Mammary epithelial cell (primary cell): ENCODE measurements at regions of chr6 and their contacts with region 1.

Region 1: DNA sequence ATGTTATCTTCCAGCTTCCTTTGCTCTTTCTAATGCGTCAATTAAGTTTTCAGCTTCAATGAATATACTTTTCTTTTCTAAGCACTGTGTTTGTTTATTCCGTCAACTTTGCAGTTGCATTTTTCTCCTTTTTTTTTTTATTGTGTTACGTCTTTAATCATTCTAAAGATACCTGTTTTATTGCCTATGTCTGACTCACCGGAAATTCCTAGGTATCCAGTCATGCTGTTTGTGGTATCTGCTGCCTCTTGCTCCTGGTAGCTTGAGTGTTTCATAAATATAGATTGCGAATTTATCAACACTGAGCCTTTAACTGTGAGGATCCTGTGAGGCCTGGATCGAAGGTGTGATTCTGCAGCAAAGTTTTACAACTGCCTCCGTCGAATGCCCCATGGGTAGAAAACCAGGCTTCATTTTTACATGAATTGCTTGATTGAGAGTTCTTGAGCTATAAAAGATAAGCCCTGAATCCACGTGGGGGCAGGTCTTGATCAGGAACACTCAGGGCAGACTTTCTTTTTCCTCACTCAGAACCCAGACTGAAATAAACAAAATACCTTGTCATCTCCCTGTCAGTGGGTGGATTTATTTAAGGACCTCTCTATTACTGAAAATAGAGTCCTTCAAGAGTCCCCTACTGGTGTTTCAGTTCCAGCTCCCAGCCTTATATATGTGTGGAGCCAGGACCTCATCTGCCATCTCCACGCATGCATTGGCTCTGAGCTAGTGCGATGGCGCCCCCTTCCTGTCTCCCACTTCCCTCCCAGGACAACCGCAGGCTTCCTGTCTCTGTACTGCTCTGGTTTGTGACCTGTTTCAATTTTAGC is 60.1 kb upstream of the LRRC1 start:
- DNase-seq: peak; percentile 93
- H3K4me3 ChIP-seq: peak overlapping the region in 2 of 3 experiments; percentile 25 to 29
- H3K27ac ChIP-seq: peak overlapping the region; percentile 87
- H3K4me1 ChIP-seq: peaks cover 31% of the 10 kb centered on the region
- H3K27me3 ChIP-seq: no peaks in the 10 kb centered on the region
- CTCF ChIP-seq: peak; percentile 52 to 61

Region 2: GRCh38 chr6:53556986-53557715 is 177.5 kb before region 1 on chr6:
- CTCF ChIA-PET with region 1: no interaction called
- dilution Hi-C with region 1: no loop called
- in situ Hi-C with region 1: no loop called
- intact Hi-C with region 1: no loop called
- DNase-seq: no peak
- H3K4me3 ChIP-seq: no peak overlapping the region
- H3K27ac ChIP-seq: no peak overlapping the region
- H3K4me1 ChIP-seq: no peaks in the 10 kb centered on the region
- H3K27me3 ChIP-seq: no peaks in the 10 kb centered on the region
- CTCF ChIP-seq: no peak

Region 3: DNA sequence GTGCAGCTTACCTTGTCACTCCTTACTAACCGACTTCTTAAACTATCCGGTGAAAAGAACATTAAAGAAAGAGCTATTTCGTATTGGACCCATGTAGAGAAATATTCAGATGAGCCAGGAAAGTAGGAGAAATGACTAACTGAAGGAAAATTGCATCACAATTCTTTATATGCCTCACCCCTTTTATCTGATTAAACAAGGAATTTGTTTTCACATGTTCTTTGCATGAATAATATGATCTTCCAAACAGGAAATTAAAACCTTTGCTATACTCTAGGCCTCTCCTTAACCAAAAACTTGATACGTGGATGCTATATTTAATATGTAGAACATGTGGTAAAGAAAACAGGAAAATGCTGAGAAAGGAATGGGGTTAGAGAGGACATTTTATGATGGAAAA is 18.2 kb after region 1 on chr6:
- CTCF ChIA-PET with region 1: no interaction called
- dilution Hi-C with region 1: no loop called
- in situ Hi-C with region 1: no loop called
- intact Hi-C with region 1: loop called (anchors 2 kb)
- DNase-seq: peak; percentile 76
- H3K4me3 ChIP-seq: no peak overlapping the region
- H3K27ac ChIP-seq: peak overlapping the region; percentile 86
- H3K4me1 ChIP-seq: peaks cover 22% of the 10 kb centered on the region
- H3K27me3 ChIP-seq: no peaks in the 10 kb centered on the region
- CTCF ChIP-seq: no peak

Region 4: DNA sequence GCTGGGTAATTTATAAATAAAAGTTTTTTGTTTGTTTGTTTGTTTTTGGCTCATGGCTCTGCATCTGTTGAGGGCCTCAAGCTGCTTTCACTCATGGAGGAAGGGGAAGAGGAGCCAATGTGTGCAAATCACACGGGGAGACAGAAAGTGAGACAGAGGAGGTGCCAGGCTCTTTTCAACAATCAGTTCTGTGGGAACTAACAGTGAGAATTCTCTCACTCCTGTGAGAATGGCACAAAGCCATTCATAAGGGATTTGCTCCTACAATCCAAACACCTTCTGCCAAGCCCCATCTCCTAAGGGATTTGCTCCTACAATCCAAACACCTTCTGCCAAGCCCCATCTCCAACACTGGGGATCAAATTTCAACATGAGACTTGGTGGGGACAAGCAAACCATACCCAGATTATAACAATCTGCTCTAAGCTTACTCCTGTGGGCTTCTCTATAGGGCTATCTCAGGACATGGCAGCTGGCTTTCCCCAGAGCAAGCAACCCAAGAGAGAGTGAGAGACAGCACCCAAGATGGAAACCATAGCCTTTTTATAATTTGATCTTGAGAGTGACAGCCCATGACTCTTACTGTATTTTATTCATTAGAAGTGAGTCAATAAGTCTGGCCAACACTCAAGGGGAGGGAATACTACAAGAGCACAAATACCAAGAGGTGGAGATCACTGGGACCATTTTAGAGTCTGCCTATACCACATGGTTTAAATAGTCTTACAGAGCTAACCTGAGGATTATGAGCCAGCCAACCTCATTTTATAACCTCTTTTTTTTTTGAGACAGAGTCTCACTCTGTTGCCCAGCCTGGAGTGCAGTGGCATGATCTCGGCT is 37.3 kb after region 1 on chr6:
- CTCF ChIA-PET with region 1: no interaction called
- dilution Hi-C with region 1: no loop called
- in situ Hi-C with region 1: no loop called
- intact Hi-C with region 1: loop called (anchors 1 kb)
- DNase-seq: peak; percentile 42
- H3K4me3 ChIP-seq: no peak overlapping the region
- H3K27ac ChIP-seq: no peak overlapping the region
- H3K4me1 ChIP-seq: no peaks in the 10 kb centered on the region
- H3K27me3 ChIP-seq: no peaks in the 10 kb centered on the region
- CTCF ChIP-seq: no peak

Region 5: DNA sequence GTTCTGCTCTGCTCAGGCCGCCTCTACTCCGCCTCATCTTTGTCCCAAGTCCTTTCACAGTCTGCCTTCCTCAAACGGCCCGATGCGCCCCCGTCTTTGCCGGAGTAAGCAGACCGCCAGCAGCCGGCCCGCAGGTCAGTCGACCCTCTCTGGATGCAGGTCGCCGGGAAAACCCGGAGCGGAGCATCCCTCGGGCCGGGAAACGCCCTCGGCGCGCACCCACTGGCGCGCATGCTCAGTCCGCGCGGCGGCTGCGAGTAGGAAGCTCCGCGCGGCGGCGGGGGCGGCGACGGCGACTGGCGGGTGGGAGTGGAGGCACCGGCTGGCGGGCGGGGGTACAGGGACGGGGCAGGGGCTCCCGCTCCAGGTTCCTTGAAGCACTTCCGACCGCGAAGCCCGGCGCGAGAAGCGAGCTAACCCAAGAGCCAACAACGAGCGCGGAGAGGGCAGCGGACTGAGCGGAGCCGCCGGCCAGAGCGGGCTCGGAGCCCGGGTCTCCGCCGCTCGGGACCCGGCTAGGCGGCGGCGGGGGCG is 60.1 kb after region 1 on chr6 and contains the start of gene LRRC1:
- CTCF ChIA-PET with region 1: interaction called, 10 read pairs
- dilution Hi-C with region 1: no loop called
- in situ Hi-C with region 1: no loop called
- intact Hi-C with region 1: loop called (anchors 1 kb)
- DNase-seq: peak; percentile 89
- H3K4me3 ChIP-seq: peak within 1 kb of the TSS; percentile 89 to 97 (median 93)
- H3K27ac ChIP-seq: peak within 1 kb of the TSS; percentile 77
- H3K4me1 ChIP-seq: peaks cover 31% of the 10 kb centered on the region
- H3K27me3 ChIP-seq: no peaks in the 10 kb centered on the region
- CTCF ChIP-seq: no peak
- total RNA-seq, gene LRRC1: 18.2 to 19.2 TPM

Region 6: GRCh38 chr6:53815381-53816119 is 80.9 kb after region 1 on chr6:
- CTCF ChIA-PET with region 1: no interaction called
- dilution Hi-C with region 1: no loop called
- in situ Hi-C with region 1: no loop called
- intact Hi-C with region 1: no loop called
- DNase-seq: no peak
- H3K4me3 ChIP-seq: no peak overlapping the region
- H3K27ac ChIP-seq: no peak overlapping the region
- H3K4me1 ChIP-seq: peaks cover 24% of the 10 kb centered on the region
- H3K27me3 ChIP-seq: no peaks in the 10 kb centered on the region
- CTCF ChIP-seq: no peak

Region 7: GRCh38 chr6:53926525-53926924 is 191.8 kb after region 1 on chr6:
- CTCF ChIA-PET with region 1: interaction called, 11 read pairs
- dilution Hi-C with region 1: no loop called
- in situ Hi-C with region 1: no loop called
- intact Hi-C with region 1: no loop called
- DNase-seq: peak; percentile 40
- H3K4me3 ChIP-seq: no peak overlapping the region
- H3K27ac ChIP-seq: no peak overlapping the region
- H3K4me1 ChIP-seq: peaks cover 32% of the 10 kb centered on the region
- H3K27me3 ChIP-seq: no peaks in the 10 kb centered on the region
- CTCF ChIP-seq: no peak